ENCODE measurements at regions of chr19 and their contacts with region 1.

Region 1: DNA sequence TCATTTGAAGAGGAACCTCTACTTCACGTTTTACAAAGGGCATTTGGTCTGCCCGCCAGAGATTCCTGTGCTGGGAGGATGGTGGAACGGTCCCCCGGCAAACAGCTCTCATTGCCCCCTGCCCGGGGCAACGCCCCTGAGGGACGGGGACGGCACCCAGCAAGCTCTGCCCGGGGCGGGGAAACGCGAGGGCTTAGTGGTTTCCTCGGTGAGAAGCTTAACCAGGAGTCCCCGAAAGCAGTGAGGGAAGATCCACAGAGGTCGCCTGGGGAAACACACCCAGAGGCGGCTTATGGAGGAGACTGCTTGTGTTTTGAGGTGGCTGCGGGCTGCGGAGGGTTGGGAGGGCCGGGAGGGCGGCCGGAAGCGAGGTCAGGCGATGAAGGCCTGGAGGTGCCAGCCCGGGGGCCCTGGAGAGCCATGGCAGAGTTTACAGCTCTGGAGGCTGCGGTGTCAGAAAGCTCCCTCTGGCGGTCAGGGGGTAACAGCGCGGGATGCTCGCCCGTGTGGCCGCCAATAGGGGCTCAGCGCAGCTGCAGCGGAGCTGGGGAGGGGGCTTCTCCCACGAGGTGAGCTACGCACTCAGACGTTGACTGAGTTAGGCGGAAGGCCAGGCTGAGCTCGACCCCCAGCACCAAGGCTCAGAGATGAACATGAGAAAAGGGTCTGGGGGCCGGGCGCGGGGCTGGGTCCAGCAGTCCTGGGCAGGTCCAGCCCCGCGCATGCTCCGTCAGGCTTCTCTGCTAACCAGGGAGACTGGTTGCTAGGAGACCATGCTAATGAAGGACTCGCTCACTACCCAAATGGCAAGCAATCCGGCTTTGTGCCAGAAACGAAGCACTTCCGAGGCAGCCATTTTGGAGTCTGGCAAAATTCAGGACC is 652 bp upstream of the TPGS1 start:
- DNase-seq: peak; percentile 96
- H3K4me3 Mint-ChIP-seq: peak overlapping the region; percentile 83
- H3K27ac Mint-ChIP-seq: peak overlapping the region; percentile 99
- H3K4me1 Mint-ChIP-seq: peaks cover 38% of the 10 kb centered on the region
- H3K27me3 Mint-ChIP-seq: no peaks in the 10 kb centered on the region

Region 2: GRCh38 chr19:344625-345319 is 161.9 kb before region 1 on chr19 and contains the start of gene MIER2:
- CTCF ChIA-PET with region 1: interaction called, 4 read pairs
- intact Hi-C with region 1: loop called (anchors 1 kb)
- DNase-seq: peak; percentile 89
- H3K4me3 Mint-ChIP-seq: peak within 1 kb of the TSS; percentile 75
- H3K27ac Mint-ChIP-seq: peak within 1 kb of the TSS; percentile 10
- H3K4me1 Mint-ChIP-seq: peaks cover 48% of the 10 kb centered on the region
- H3K27me3 Mint-ChIP-seq: peaks cover 9% of the 10 kb centered on the region
- total RNA-seq, gene MIER2: 19.4 to 20.4 TPM

Region 3: GRCh38 chr19:488505-489417 is 17.9 kb before region 1 on chr19:
- CTCF ChIA-PET with region 1: interaction called, 7 read pairs
- intact Hi-C with region 1: loop called (anchors 1 kb)
- DNase-seq: peak; percentile 93
- H3K4me3 Mint-ChIP-seq: peak overlapping the region; percentile 81
- H3K27ac Mint-ChIP-seq: peak overlapping the region; percentile 86
- H3K4me1 Mint-ChIP-seq: peaks cover 11% of the 10 kb centered on the region
- H3K27me3 Mint-ChIP-seq: peaks cover 20% of the 10 kb centered on the region

Region 4: GRCh38 chr19:522726-523125 is 16.1 kb after region 1 on chr19:
- CTCF ChIA-PET with region 1: interaction called, 16 read pairs
- intact Hi-C with region 1: no loop called
- DNase-seq: no peak
- H3K4me3 Mint-ChIP-seq: no peak overlapping the region
- H3K27ac Mint-ChIP-seq: no peak overlapping the region
- H3K4me1 Mint-ChIP-seq: no peaks in the 10 kb centered on the region
- H3K27me3 Mint-ChIP-seq: no peaks in the 10 kb centered on the region

Region 5: GRCh38 chr19:572140-572742 is 65.6 kb after region 1 on chr19 and contains the start of gene BSG:
- CTCF ChIA-PET with region 1: interaction called, 4 read pairs
- intact Hi-C with region 1: loop called (anchors 2 kb)
- DNase-seq: peak; percentile 99
- H3K4me3 Mint-ChIP-seq: peak within 1 kb of the TSS; percentile 90
- H3K27ac Mint-ChIP-seq: peak within 1 kb of the TSS; percentile 98
- H3K4me1 Mint-ChIP-seq: peaks cover 36% of the 10 kb centered on the region
- H3K27me3 Mint-ChIP-seq: no peaks in the 10 kb centered on the region
- total RNA-seq, gene BSG: 160 to 161 TPM

Region 6: GRCh38 chr19:680287-681028 is 173.8 kb after region 1 on chr19:
- CTCF ChIA-PET with region 1: no interaction called
- intact Hi-C with region 1: loop called (anchors 1 kb)
- DNase-seq: peak; percentile 100
- H3K4me3 Mint-ChIP-seq: peak overlapping the region; percentile 94
- H3K27ac Mint-ChIP-seq: peak overlapping the region; percentile 99
- H3K4me1 Mint-ChIP-seq: peaks cover 11% of the 10 kb centered on the region
- H3K27me3 Mint-ChIP-seq: peaks cover 5% of the 10 kb centered on the region

Region 7: GRCh38 chr19:791567-792305 is 285.1 kb after region 1 on chr19:
- CTCF ChIA-PET with region 1: no interaction called
- intact Hi-C with region 1: no loop called
- DNase-seq: no peak
- H3K4me3 Mint-ChIP-seq: no peak overlapping the region
- H3K27ac Mint-ChIP-seq: no peak overlapping the region
- H3K4me1 Mint-ChIP-seq: peaks cover 4% of the 10 kb centered on the region
- H3K27me3 Mint-ChIP-seq: peaks cover 3% of the 10 kb centered on the region

Measured in activated naive CD4-positive, alpha-beta T cell treated with anti-CD3 and anti-CD28 coated beads for 36 hours (primary cell).